ENCODE measurements at regions of chr15 and their contacts with region 1.

Region 1: DNA sequence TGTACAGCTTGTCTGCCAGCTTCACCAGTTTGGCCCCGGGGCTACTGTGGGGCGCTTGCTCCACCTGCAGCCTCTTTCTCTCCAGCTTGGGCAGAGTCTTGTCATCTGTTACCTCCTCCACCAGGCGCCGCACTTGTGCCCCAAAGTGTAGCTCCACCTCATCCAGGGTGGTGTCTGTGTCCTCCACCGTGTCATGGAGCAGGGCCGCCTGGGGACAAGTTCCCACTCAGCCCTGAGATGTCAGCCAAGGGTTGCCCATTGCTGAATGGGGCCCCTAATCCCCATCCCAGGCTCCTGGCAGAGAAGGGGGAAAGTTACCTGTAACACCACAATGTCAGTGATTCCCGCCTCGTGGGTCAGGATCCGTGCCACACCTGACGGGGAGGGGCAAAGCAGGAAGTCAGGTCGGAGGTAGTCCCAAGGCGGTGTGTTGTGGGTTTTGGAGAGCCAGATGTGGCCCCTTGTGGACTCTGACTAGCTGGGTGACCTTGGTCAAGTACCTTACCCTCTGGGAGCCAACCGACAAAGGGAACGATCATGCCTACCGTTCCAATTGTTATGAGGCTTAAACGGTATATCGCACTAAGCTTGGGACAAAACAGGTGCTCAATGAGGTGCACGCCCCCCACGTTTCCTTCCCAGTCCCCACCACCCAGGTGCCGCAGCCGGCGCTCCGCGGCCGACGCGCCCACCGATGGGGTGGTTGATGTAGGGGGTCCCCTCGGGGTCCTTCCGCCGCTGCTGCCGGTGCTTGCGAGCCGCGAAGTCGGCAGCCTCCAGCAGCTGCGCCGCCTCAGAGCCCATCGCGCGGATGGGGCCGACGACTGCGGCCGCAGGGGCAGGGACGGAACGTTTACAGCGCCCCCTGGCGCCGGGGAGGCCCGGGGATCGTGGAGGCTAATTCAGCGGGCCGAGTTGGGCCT is at the start of gene HDDC3:
- DNase-seq: peak; percentile 98
- H3K4me3 Mint-ChIP-seq: peak within 1 kb of the TSS; percentile 99
- H3K27ac Mint-ChIP-seq: peak within 1 kb of the TSS; percentile 99
- H3K4me1 Mint-ChIP-seq: peaks cover 49% of the 10 kb centered on the region
- H3K27me3 Mint-ChIP-seq: no peaks in the 10 kb centered on the region
- total RNA-seq, gene HDDC3: 36.3 and 39.9 TPM in 2 replicates

Region 2: DNA sequence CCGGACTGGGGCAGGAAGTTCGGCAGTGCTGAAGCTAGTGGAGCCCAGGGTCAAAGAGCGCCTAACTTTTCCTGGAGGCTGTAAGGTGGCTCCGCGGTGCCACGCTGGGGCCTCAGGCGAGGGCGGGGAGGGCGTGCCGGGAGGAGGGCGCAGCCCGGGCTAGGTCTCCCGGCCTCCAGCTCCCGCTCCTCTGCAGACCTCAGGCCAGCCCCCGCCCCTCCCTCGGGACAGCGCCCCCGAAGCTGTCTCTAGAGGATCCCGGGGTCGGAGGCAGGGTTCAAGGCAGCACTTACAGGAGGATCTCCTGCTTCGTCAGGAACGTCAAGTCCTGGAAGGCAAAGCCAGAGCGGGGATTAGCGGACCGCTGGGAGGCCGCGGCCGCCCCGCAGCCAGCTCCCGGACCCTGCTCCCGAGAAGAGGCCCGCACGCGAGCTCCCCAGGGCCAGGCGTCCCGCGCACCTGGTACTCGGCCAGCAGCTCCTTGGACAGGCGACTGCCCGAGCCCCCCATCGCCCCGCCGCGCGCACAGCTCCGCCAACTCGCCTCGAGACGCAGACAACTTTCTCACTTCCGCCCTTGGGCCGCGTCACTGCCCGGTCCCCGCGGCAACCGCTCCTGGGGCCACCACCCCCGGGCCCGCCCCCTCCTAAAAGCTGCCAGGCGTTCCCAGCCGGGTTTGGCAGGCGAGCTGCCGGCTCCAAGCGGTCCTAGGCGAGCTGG is 698.5 kb before region 1 on chr15 and contains the start of gene CIB1:
- intact Hi-C with region 1: loop called (anchors 2 kb)
- DNase-seq: peak; percentile 99
- H3K4me3 Mint-ChIP-seq: peak within 1 kb of the TSS; percentile 99
- H3K27ac Mint-ChIP-seq: peak within 1 kb of the TSS; percentile 95
- H3K4me1 Mint-ChIP-seq: peaks cover 43% of the 10 kb centered on the region
- H3K27me3 Mint-ChIP-seq: no peaks in the 10 kb centered on the region
- total RNA-seq, gene CIB1: 149 and 156 TPM in 2 replicates

Region 3: GRCh38 chr15:90387537-90388461 is 544.2 kb before region 1 on chr15 and contains the start of gene IQGAP1:
- intact Hi-C with region 1: loop called (anchors 10 kb)
- DNase-seq: peak; percentile 99
- H3K4me3 Mint-ChIP-seq: peak within 1 kb of the TSS; percentile 88
- H3K27ac Mint-ChIP-seq: peak within 1 kb of the TSS; percentile 99
- H3K4me1 Mint-ChIP-seq: peaks cover 42% of the 10 kb centered on the region
- H3K27me3 Mint-ChIP-seq: no peaks in the 10 kb centered on the region
- total RNA-seq, gene IQGAP1: 154 and 160 TPM in 2 replicates

Region 4: DNA sequence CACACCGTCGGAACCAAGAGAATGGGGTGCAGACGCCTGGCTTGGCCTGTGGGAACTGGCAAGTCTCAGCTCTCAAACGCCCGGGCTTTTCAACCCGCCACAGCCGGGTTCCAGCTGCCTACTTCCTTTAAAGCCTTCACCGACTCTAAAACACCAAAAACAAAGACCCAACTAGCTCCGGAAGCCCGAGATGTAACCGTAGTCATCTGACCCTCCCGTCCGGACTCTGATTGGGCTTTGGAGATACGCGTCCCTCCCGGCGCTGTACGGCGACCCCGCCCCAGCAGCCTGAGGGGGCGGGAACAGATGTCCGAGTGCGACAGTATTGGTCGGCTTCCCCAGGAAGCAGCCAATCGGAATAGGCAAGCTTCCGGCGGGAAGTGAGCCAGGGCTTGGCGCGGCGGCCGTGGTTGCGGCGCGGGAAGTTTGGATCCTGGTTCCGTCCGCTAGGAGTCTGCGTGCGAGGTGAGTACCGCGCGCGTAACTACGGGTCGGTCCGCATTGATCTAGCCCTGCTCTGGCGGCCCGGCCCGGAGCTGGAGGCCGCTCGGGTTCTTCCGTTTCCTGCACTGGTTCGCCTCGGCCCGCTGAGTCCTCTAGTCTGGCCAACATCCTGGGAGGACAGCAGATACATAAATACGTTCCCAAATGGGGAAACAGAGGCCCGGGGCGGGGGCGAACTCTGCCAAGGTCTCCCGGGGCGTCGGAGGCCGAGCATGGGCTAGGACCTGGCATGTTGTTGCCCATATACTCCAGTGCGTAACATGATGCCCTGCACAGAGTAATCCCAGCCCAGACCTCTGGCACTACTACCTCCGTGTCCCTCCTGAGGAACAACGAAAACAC is 214.8 kb before region 1 on chr15 and contains the start of gene BLM:
- intact Hi-C with region 1: loop called (anchors 2 kb)
- DNase-seq: peak; percentile 99
- H3K4me3 Mint-ChIP-seq: peak within 1 kb of the TSS; percentile 88
- H3K27ac Mint-ChIP-seq: peak within 1 kb of the TSS; percentile 96
- H3K4me1 Mint-ChIP-seq: peaks cover 27% of the 10 kb centered on the region
- H3K27me3 Mint-ChIP-seq: no peaks in the 10 kb centered on the region
- total RNA-seq, gene BLM: 64.1 and 66.4 TPM in 2 replicates

Region 5: DNA sequence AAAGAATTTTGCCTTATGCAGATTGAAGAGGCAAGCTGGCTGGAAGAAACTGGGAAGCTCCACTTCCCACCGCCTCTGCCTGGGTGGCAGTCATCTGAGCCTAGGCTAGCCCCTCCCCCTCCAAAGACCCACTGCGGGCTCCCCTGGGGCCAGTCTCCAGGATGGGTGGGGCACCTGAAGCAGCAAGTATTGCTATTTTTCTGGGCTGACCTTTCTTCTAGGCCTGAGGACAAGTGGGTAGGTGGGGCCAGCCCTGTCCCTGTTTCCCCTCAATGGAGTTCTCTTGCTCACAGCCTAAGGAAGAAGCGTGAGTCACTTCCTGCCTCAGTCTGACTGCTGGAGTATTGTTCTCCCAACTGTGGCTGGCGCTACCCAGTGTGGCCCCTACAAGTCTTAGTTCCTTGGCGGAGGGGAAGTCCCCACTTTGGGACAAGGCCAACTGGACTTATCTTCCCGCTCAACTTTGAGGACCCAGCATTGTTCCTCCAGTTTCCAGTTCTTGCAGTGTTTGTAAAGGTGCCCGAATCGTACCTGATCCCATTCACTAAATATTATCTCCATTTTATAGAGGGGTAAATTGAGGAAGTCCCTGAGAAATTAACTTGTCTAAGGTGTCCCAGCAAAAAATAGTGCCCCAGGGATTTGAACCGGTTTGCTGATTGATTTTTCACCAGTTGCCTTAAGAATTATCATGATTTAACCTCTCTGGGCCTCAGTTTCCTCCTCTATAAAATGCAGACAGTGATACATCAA is 62.2 kb before region 1 on chr15:
- intact Hi-C with region 1: loop called (anchors 5 kb)
- DNase-seq: peak; percentile 86
- H3K4me3 Mint-ChIP-seq: peak overlapping the region; percentile 96
- H3K27ac Mint-ChIP-seq: peak overlapping the region; percentile 96
- H3K4me1 Mint-ChIP-seq: peaks cover 53% of the 10 kb centered on the region
- H3K27me3 Mint-ChIP-seq: no peaks in the 10 kb centered on the region

Region 6: DNA sequence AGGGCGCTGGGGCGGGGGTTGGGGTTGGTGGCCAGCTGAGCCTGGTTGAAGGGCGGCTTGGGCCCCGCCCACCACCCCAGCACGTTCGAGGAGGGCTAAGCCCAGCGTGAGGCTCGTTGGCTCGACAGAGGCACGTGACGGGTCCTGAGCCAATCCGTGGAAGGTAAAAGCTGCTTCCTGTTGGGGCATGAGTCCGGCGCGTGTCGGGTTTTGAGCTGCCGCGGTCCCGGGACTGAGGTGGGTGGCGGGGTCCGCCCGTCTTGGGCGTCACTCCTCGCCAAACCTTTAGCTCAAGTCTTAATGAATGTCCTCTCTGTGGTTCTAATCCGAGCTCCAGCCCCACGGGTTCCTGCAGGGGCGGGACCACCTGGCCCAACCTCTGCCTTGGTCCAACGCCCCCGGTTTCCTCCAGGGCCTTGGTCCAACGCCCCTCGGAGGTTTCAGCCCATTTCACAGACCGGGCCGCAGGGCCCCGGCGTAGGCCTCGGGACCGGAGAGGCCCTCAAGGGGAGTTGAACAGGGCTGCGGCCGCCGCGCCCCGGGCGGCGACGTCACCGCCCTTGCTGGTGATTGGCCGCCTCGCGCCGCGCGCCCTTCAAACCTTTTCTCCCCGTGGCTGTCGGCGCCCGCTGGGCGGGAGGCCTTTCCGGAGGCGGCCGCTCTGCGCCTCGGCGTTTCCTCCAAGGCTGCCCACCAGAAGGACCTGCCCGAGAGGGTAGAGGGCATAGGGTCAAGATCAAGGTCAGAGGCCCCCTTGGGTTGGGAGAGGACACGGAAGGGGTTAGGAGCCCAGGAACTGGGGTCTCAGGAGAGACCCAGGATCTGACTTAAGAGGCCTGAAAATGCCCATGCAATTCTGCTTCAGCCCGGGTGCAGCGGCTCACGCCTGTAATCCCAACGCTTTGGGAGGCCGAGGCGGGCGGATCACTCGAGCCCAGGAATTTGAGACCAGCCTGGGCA is 23.0 kb after region 1 on chr15 and contains the start of gene RCCD1:
- intact Hi-C with region 1: loop called (anchors 1 kb)
- DNase-seq: peak; percentile 98
- H3K4me3 Mint-ChIP-seq: peak within 1 kb of the TSS; percentile 92
- H3K27ac Mint-ChIP-seq: peak within 1 kb of the TSS; percentile 98
- H3K4me1 Mint-ChIP-seq: peaks cover 15% of the 10 kb centered on the region
- H3K27me3 Mint-ChIP-seq: no peaks in the 10 kb centered on the region
- total RNA-seq, gene RCCD1: 28.0 and 32.3 TPM in 2 replicates